ENCODE measurements at regions of chr2 and their contacts with region 1.

Region 1: DNA sequence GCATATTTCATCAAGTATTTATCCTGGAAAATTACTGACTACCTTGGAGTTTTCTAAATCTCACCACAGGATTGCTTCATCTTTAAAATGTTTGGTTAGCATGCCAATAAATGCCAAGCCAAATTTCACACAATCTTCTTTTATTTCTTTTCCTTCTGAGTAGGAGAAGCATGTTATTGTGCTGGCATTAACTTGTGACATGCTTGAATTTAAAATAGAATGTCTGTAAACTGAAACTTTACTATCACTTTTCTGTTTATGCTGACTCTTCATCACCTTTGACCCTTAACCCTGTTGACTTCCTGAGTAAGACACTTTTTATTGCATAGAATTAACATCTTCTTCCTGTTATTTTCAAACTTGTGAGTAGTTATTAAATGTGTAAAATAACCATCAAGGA is 56.2 kb upstream of the LRRTM4 start:
- DNase-seq: no peak
- ATAC-seq: no peak
- H3K4me3 ChIP-seq: no peak overlapping the region
- H3K27ac ChIP-seq: no peak overlapping the region
- H3K4me1 ChIP-seq: no peaks in the 10 kb centered on the region
- H3K27me3 ChIP-seq: no peaks in the 10 kb centered on the region
- CTCF ChIP-seq: no peak
- POLR2A ChIP-seq: no peak

Region 2: DNA sequence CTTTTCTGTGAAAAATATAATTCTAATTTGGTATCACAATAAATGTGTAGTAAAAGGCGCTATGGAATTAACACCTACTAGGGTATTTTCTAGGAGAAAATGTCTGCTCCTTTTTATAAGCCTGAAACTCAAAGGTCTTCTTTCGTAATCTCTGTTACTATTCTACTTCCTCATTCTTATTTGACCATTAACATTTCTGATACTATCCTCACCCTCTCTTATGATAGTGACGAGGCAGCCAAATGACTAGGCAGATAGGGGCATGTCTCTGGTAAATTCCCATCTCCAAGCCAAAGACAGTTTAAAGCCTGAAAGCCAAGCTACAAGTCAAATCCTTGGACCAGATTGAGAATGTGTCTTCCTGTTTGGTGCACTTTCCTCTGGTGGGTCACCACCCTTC is 307.9 kb before region 1 on chr2:
- intact Hi-C with region 1: no loop called
- DNase-seq: no peak
- ATAC-seq: no peak
- H3K4me3 ChIP-seq: no peak overlapping the region
- H3K27ac ChIP-seq: no peak overlapping the region
- H3K4me1 ChIP-seq: no peaks in the 10 kb centered on the region
- H3K27me3 ChIP-seq: no peaks in the 10 kb centered on the region
- CTCF ChIP-seq: no peak
- POLR2A ChIP-seq: no peak

Region 3: GRCh38 chr2:77521931-77522470 is 56.4 kb before region 1 on chr2 and contains the start of gene LRRTM4:
- intact Hi-C with region 1: no loop called
- DNase-seq: peak in 3 of 5 donors; percentile 11 to 37 (median 31)
- ATAC-seq: peak in 3 of 4 donors; percentile 79 to 97 (median 95)
- H3K4me3 ChIP-seq: peak within 1 kb of the TSS in 8 of 12 donors; percentile 8 to 38 (median 28)
- H3K27ac ChIP-seq: no peak within 1 kb of the TSS
- H3K4me1 ChIP-seq: no peaks in the 10 kb centered on the region
- H3K27me3 ChIP-seq: peaks cover 0 to 5% (median 0%) of the 10 kb centered on the region in 9 donors
- CTCF ChIP-seq: peak in 8 of 12 donors; percentile 7 to 46 (median 30)
- POLR2A ChIP-seq: no peak
- total RNA-seq, gene LRRTM4: 0.38 to 1.3 (median 0.63) TPM in 8 of 9 donors, not detected in the other

Region 4: GRCh38 chr2:78218066-78218465 is 639.7 kb after region 1 on chr2:
- intact Hi-C with region 1: loop called in 1 of 10 experiments (anchors 10 kb)
- DNase-seq: no peak
- ATAC-seq: no peak
- H3K4me3 ChIP-seq: no peak overlapping the region
- H3K27ac ChIP-seq: no peak overlapping the region
- H3K4me1 ChIP-seq: no peaks in the 10 kb centered on the region
- H3K27me3 ChIP-seq: no peaks in the 10 kb centered on the region
- CTCF ChIP-seq: no peak
- POLR2A ChIP-seq: no peak